CD8-positive, alpha-beta T cell (primary cell): ENCODE measurements at regions of chr7 and their contacts with region 1.

Region 1: GRCh38 chr7:97179454-97180104 is 62.1 kb downstream of the SDHAF3 start:
- DNase-seq: peak; percentile 6 to 71 (median 41)
- ATAC-seq: peak; percentile 69
- H3K4me3 ChIP-seq: no peak overlapping the region
- H3K4me3 Mint-ChIP-seq: no peak overlapping the region
- H3K27ac ChIP-seq: no peak overlapping the region
- H3K27ac Mint-ChIP-seq: no peak overlapping the region
- H3K4me1 ChIP-seq: no peaks in the 10 kb centered on the region
- H3K4me1 Mint-ChIP-seq: no peaks in the 10 kb centered on the region
- H3K27me3 ChIP-seq: no peaks in the 10 kb centered on the region
- H3K27me3 Mint-ChIP-seq: no peaks in the 10 kb centered on the region
- CTCF ChIP-seq: peak; percentile 80

Region 2: GRCh38 chr7:95545078-95545498 is 1634.5 kb before region 1 on chr7:
- CTCF ChIA-PET with region 1: no interaction called
- POLR2A ChIA-PET with region 1: no interaction called
- intact Hi-C with region 1: no loop called
- DNase-seq: no peak
- ATAC-seq: no peak
- H3K4me3 ChIP-seq: no peak overlapping the region
- H3K4me3 Mint-ChIP-seq: no peak overlapping the region
- H3K27ac ChIP-seq: no peak overlapping the region
- H3K27ac Mint-ChIP-seq: no peak overlapping the region
- H3K4me1 ChIP-seq: no peaks in the 10 kb centered on the region
- H3K4me1 Mint-ChIP-seq: no peaks in the 10 kb centered on the region
- H3K27me3 ChIP-seq: peaks cover 0 to 9% of the 10 kb centered on the region in 2 experiments
- H3K27me3 Mint-ChIP-seq: peaks cover 3% of the 10 kb centered on the region
- CTCF ChIP-seq: no peak

Region 3: GRCh38 chr7:96691702-96692101 is 487.9 kb before region 1 on chr7:
- CTCF ChIA-PET with region 1: no interaction called
- POLR2A ChIA-PET with region 1: no interaction called
- intact Hi-C with region 1: loop called in 1 of 2 experiments (anchors 5 kb)
- DNase-seq: no peak
- ATAC-seq: no peak
- H3K4me3 ChIP-seq: no peak overlapping the region
- H3K4me3 Mint-ChIP-seq: no peak overlapping the region
- H3K27ac ChIP-seq: no peak overlapping the region
- H3K27ac Mint-ChIP-seq: no peak overlapping the region
- H3K4me1 ChIP-seq: no peaks in the 10 kb centered on the region
- H3K4me1 Mint-ChIP-seq: peaks cover 43% of the 10 kb centered on the region
- H3K27me3 ChIP-seq: no peaks in the 10 kb centered on the region
- H3K27me3 Mint-ChIP-seq: no peaks in the 10 kb centered on the region
- CTCF ChIP-seq: no peak

Region 4: DNA sequence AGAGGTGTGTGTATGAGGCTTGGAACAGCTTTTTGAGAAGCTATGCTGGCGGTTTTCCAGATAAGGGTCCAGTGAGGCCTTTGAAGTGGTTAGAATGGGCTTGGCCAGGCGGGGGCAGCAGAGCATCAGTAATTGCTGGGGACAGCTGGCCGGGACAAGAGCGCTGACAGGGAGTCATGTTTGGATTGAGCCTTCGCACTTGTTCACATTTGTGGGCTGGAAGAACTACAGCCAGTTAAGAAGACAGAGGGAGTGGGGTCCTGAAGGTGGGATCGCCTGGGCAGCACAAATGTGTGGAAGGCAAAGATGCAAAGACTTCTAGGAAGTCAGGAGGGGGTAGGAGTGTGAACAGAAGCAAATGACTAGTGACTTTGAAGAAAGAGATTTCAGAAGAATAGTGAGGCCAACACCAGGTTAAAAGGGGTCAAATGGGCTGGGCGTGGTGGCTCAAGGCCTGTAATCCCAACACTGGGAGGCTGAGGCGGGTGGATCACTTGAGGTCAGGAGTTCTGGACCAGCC is 74.8 kb before region 1 on chr7:
- CTCF ChIA-PET with region 1: interaction called, 9 read pairs
- POLR2A ChIA-PET with region 1: no interaction called
- intact Hi-C with region 1: loop called (anchors 1 kb)
- DNase-seq: peak; percentile 25 to 71 (median 64)
- ATAC-seq: peak; percentile 51
- H3K4me3 ChIP-seq: no peak overlapping the region
- H3K4me3 Mint-ChIP-seq: no peak overlapping the region
- H3K27ac ChIP-seq: no peak overlapping the region
- H3K27ac Mint-ChIP-seq: no peak overlapping the region
- H3K4me1 ChIP-seq: no peaks in the 10 kb centered on the region
- H3K4me1 Mint-ChIP-seq: no peaks in the 10 kb centered on the region
- H3K27me3 ChIP-seq: no peaks in the 10 kb centered on the region
- H3K27me3 Mint-ChIP-seq: peaks cover 32% of the 10 kb centered on the region
- CTCF ChIP-seq: peak; percentile 28

Region 5: DNA sequence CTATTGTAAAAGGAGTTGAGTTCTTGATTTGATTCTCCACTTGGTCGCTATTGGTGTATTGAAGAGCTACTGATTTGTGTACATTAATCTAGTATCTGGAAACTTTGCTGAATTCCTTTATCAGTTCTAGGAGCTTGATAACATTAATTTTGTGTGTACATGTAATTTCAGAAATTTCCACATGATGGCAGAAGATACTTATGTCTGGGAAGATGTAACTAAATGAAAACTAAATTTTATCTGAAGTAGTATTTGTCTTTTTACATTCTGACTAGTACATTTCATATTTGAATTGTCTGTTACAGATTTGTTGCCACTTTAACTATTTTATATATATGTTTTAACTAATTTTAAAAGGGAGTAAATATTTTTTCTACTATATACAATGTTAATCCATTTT is 34.5 kb before region 1 on chr7:
- CTCF ChIA-PET with region 1: interaction called, 5 read pairs
- POLR2A ChIA-PET with region 1: no interaction called
- intact Hi-C with region 1: loop called (anchors 1 to 2 kb)
- DNase-seq: peak in 2 of 9 experiments; percentile 22 to 33
- ATAC-seq: no peak
- H3K4me3 ChIP-seq: no peak overlapping the region
- H3K4me3 Mint-ChIP-seq: no peak overlapping the region
- H3K27ac ChIP-seq: no peak overlapping the region
- H3K27ac Mint-ChIP-seq: no peak overlapping the region
- H3K4me1 ChIP-seq: no peaks in the 10 kb centered on the region
- H3K4me1 Mint-ChIP-seq: peaks cover 5% of the 10 kb centered on the region
- H3K27me3 ChIP-seq: no peaks in the 10 kb centered on the region
- H3K27me3 Mint-ChIP-seq: no peaks in the 10 kb centered on the region
- CTCF ChIP-seq: peak; percentile 58

Region 6: DNA sequence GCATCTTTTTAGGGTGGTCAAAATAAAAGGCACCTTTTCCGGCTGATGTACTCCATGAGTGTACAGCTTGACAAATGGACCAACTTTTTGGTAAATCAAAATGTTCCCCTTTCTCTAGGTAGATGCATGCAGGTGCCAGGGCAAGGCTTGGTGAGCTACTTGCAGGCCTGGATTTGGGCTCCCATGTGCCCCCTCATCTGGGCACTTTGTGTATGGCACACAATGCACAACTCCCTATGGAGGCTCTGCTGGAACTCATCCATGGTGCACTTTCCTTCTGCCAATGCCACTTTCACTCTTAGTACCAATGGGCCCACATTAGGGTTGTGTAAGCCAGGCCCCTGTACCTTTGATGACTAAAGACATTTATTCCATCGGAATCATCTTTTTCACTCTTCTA is 238.7 kb after region 1 on chr7:
- CTCF ChIA-PET with region 1: no interaction called
- POLR2A ChIA-PET with region 1: no interaction called
- intact Hi-C with region 1: no loop called
- DNase-seq: no peak
- ATAC-seq: no peak
- H3K4me3 ChIP-seq: no peak overlapping the region
- H3K4me3 Mint-ChIP-seq: no peak overlapping the region
- H3K27ac ChIP-seq: no peak overlapping the region
- H3K27ac Mint-ChIP-seq: no peak overlapping the region
- H3K4me1 ChIP-seq: no peaks in the 10 kb centered on the region
- H3K4me1 Mint-ChIP-seq: no peaks in the 10 kb centered on the region
- H3K27me3 ChIP-seq: no peaks in the 10 kb centered on the region
- H3K27me3 Mint-ChIP-seq: peaks cover 3% of the 10 kb centered on the region
- CTCF ChIP-seq: no peak